CD4-positive, alpha-beta memory T cell (primary cell): ENCODE measurements at regions of chr11 and their contacts with region 1.

Region 1: DNA sequence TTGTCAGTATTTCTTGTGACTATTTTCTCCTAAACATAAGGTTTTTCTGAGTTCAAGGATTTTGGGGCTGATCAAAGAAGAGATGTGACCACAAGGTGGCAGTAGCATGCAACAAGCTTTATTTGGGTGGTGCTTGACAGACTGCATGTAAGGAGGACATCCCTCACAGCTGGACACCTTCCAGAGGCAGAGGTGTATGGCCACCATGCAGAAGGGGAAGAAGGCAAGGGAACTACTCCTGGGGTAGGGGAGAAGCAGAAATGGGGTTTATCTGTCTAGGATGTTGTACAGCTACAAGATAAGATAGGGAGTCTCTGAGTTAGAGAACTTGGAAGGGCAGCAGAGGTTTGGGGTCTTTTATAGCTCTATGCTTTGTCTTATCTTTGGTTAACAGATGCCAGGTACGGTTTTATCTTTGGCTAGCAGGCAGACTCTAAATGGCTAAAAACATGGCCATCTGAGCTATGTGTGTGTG is 5.1 kb upstream of the BIRC2 start:
- DNase-seq: peak; percentile 64 to 78 (median 70)
- H3K4me3 ChIP-seq: no peak overlapping the region
- H3K4me3 Mint-ChIP-seq: no peak overlapping the region
- H3K27ac ChIP-seq: peak overlapping the region; percentile 1
- H3K27ac Mint-ChIP-seq: peak overlapping the region; percentile 53 to 93 (median 77)
- H3K4me1 ChIP-seq: peaks cover 14% of the 10 kb centered on the region
- H3K4me1 Mint-ChIP-seq: peaks cover 19 to 24% (median 23%) of the 10 kb centered on the region in 4 donors
- H3K27me3 ChIP-seq: no peaks in the 10 kb centered on the region
- H3K27me3 Mint-ChIP-seq: peaks cover 0 to 1% of the 10 kb centered on the region in 2 donors

Region 2: DNA sequence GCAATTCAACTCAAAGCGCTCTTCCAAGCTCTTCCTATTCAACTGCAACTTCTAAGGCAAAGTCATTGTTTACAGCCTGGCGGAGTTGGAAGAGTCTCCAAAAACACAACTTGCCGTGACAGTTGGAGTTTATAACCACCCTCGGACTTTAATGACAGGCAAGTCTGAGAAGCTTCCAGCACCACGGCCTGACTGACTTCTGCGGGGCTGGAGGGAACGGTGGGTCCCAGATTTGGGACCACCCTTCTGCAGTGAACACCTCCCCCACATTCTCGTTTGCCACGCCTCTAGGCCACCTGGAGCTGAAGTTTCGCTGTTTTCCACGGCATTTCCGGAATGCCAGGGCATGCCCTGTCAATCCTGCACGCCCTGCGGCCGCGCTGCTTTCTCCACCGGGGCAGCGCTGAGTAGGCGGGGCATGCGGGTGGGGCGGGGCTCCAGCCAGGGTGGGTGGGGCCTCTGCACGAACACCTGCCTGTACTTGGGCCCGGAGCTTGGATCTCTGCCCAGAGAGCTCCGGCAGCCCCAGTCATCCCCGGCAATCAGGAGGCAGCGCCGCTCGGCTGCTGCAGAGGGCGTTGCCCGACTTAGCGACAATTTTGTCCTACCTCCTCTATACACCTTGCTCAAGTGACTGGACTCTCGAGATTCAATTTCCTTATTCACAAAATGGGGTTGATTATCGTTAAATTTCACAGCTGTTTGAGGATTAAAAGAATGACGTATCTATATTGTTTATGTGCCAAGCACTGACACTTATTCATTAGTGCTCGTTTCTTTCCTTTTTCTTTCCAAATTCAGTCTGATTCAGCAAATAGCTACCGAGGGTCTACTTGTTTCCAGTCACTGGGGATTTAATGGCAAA is 73.3 kb before region 1 on chr11:
- CTCF ChIA-PET with region 1: interaction called, 15 read pairs
- POLR2A ChIA-PET with region 1: no interaction called
- intact Hi-C with region 1: no loop called
- DNase-seq: peak; percentile 80 to 88 (median 85)
- H3K4me3 ChIP-seq: peak overlapping the region; percentile 45 to 49
- H3K4me3 Mint-ChIP-seq: peak overlapping the region; percentile 65 to 84 (median 77)
- H3K27ac ChIP-seq: no peak overlapping the region
- H3K27ac Mint-ChIP-seq: peak overlapping the region; percentile 68 to 85 (median 78)
- H3K4me1 ChIP-seq: peaks cover 23% of the 10 kb centered on the region
- H3K4me1 Mint-ChIP-seq: peaks cover 21 to 37% (median 27%) of the 10 kb centered on the region in 4 donors
- H3K27me3 ChIP-seq: no peaks in the 10 kb centered on the region
- H3K27me3 Mint-ChIP-seq: peaks cover 0 to 4% of the 10 kb centered on the region in 2 donors

Region 3: GRCh38 chr11:102317099-102317767 is 24.6 kb before region 1 on chr11 and contains the start of gene BIRC3:
- CTCF ChIA-PET with region 1: interaction called, 18 read pairs
- POLR2A ChIA-PET with region 1: interaction called, 8 read pairs
- intact Hi-C with region 1: loop called (anchors 1 kb)
- DNase-seq: peak; percentile 93 to 99 (median 96)
- H3K4me3 ChIP-seq: peak within 1 kb of the TSS; percentile 94 to 96
- H3K4me3 Mint-ChIP-seq: peak within 1 kb of the TSS; percentile 90 to 100 (median 96)
- H3K27ac ChIP-seq: peak within 1 kb of the TSS; percentile 95
- H3K27ac Mint-ChIP-seq: peak within 1 kb of the TSS; percentile 90 to 99 (median 99)
- H3K4me1 ChIP-seq: peaks cover 59% of the 10 kb centered on the region
- H3K4me1 Mint-ChIP-seq: peaks cover 46 to 81% (median 58%) of the 10 kb centered on the region in 4 donors
- H3K27me3 ChIP-seq: no peaks in the 10 kb centered on the region
- H3K27me3 Mint-ChIP-seq: no peaks in the 10 kb centered on the region
- total RNA-seq, gene BIRC3: 197 to 198 TPM

Region 4: GRCh38 chr11:102367364-102367763 is 25.5 kb after region 1 on chr11:
- CTCF ChIA-PET with region 1: interaction called, 23 read pairs
- POLR2A ChIA-PET with region 1: interaction called, 3 read pairs
- intact Hi-C with region 1: no loop called
- DNase-seq: peak in 4 of 5 donors; percentile 41 to 53 (median 50)
- H3K4me3 ChIP-seq: no peak overlapping the region
- H3K4me3 Mint-ChIP-seq: peak overlapping the region in 3 of 8 donors; percentile 7 to 27 (median 17)
- H3K27ac ChIP-seq: no peak overlapping the region
- H3K27ac Mint-ChIP-seq: peak overlapping the region; percentile 33 to 93 (median 72)
- H3K4me1 ChIP-seq: peaks cover 21% of the 10 kb centered on the region
- H3K4me1 Mint-ChIP-seq: peaks cover 27 to 37% (median 28%) of the 10 kb centered on the region in 4 donors
- H3K27me3 ChIP-seq: no peaks in the 10 kb centered on the region
- H3K27me3 Mint-ChIP-seq: no peaks in the 10 kb centered on the region

Region 5: DNA sequence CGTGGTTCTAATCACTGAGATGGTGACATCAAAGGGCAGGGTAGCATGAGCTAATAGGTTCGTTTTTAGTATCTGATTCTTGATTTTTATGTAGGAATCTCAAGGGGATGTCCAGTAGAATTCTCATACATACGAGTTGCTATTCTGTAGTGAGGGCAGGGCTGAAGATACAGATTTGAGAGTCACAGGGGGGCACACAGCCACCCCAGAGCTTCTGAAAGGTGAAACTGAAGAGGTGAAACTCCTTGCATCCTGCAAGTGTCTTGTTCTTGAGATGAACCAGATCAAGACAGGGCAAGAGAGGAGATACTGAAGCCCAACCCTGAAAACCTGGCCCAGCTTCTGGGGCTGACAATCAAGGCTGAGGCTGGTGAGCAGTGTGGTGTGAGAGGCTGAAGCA is 146.3 kb after region 1 on chr11:
- CTCF ChIA-PET with region 1: interaction called, 16 read pairs
- POLR2A ChIA-PET with region 1: no interaction called
- intact Hi-C with region 1: no loop called
- DNase-seq: no peak
- H3K4me3 ChIP-seq: no peak overlapping the region
- H3K4me3 Mint-ChIP-seq: no peak overlapping the region
- H3K27ac ChIP-seq: no peak overlapping the region
- H3K27ac Mint-ChIP-seq: peak overlapping the region in 1 of 7 donors; percentile 7
- H3K4me1 ChIP-seq: no peaks in the 10 kb centered on the region
- H3K4me1 Mint-ChIP-seq: peaks cover 0 to 6% (median 2%) of the 10 kb centered on the region in 4 donors
- H3K27me3 ChIP-seq: no peaks in the 10 kb centered on the region
- H3K27me3 Mint-ChIP-seq: peaks cover 0 to 3% of the 10 kb centered on the region in 2 donors

Region 6: GRCh38 chr11:102614485-102614884 is 272.6 kb after region 1 on chr11:
- CTCF ChIA-PET with region 1: interaction called, 37 read pairs
- POLR2A ChIA-PET with region 1: interaction called, 6 read pairs
- intact Hi-C with region 1: loop called (anchors 1 kb)
- DNase-seq: no peak
- H3K4me3 ChIP-seq: no peak overlapping the region
- H3K4me3 Mint-ChIP-seq: no peak overlapping the region
- H3K27ac ChIP-seq: no peak overlapping the region
- H3K27ac Mint-ChIP-seq: peak overlapping the region in 1 of 7 donors; percentile 15
- H3K4me1 ChIP-seq: no peaks in the 10 kb centered on the region
- H3K4me1 Mint-ChIP-seq: peaks cover 0 to 3% (median under 1%) of the 10 kb centered on the region in 4 donors
- H3K27me3 ChIP-seq: no peaks in the 10 kb centered on the region
- H3K27me3 Mint-ChIP-seq: peaks cover 2 to 3% of the 10 kb centered on the region in 2 donors